BJ (cell line): ENCODE measurements at regions of chr6 and their contacts with region 1.

Region 1: DNA sequence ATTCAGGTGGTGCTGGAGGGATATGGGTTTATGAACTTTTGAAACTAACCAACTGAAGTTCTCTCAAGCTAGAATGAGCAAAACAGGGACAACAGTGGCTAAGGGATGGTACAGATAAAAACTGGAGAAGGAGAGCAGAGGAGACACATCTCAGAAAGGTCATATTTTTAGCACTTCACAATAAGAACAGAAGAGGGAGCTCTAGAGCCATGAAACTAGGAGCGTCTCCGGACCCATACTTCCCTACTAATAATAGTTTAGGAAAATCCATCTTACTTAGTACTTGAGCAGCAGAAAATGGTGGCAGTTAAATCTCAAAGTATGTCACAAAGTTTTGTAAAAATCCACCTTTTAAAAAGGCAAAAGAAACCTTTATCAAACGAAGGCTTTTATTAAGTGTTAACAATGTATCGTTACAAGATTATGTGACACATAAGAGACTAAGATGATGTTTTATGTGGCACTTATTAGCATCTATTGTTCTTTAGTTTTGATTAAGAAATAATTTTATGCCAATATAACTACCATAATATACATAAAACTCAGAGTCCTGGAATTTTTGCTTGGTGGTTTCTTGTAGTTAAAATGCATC is 278.6 kb downstream of the TBC1D32 start:
- DNase-seq: peak; percentile 3
- H3K4me3 ChIP-seq: no peak overlapping the region
- H3K27me3 ChIP-seq: no peaks in the 10 kb centered on the region
- CTCF ChIP-seq: peak; percentile 71

Region 2: GRCh38 chr6:121399966-121400365 is 344.3 kb after region 1 on chr6:
- CTCF ChIA-PET with region 1: interaction called, 37 read pairs
- POLR2A ChIA-PET with region 1: no interaction called
- DNase-seq: no peak
- H3K4me3 ChIP-seq: no peak overlapping the region
- H3K27me3 ChIP-seq: no peaks in the 10 kb centered on the region
- CTCF ChIP-seq: no peak